ENCODE measurements at regions of chr4 and their contacts with region 1.

Region 1: DNA sequence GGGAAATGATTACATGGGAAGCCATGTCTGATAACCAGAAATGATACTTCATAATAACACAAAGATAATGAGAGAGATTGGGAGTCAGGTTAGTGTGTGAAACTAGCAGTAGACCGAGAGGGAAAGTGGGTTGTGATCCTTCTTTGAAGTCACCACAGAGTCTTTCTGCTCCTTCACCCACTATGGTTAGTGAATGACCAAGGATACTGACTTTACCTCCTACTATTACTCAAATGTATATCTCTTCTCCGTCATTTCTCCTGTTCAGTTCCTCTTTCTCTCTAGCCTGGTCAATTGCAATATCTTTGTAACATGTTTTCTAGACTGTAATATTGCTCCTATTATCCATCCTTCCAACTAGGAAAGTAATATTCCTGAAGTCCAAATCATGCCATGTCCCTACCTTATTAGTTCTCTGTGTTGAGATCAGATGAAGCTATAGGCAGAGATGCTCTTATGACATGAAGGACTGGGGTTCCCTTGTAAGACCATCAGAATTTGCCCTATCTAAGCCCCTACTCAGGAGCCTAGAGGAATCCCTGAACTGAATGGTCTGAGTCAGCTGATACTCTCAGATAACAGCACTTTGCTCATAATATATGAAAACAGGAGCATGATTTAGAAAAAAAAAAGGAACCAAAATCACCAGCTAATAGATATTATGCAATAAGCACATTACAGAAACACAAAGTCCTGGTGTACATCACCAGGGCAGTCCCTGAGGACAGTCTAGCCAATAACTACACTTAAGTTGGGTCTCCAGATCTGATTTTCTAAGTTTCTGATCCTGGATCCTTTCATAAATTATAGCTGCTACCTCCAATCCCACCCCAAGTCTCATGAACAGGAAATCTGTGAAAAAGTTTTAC is 81.2 kb downstream of the SHROOM3 start:
- DNase-seq: no peak
- ATAC-seq: no peak
- H3K4me3 ChIP-seq: no peak overlapping the region
- H3K27ac ChIP-seq: no peak overlapping the region
- H3K4me1 ChIP-seq: 0 out of 2 replicates have a peak, but pooled peaks cover 1% of the 10 kb centered on the region
- H3K27me3 ChIP-seq: no peaks in the 10 kb centered on the region
- CTCF ChIP-seq: no peak
- POLR2A ChIP-seq: no peak
- RAD21 ChIP-seq: no peak

Region 2: GRCh38 chr4:76585897-76586360 is 69.7 kb after region 1 on chr4:
- CTCF ChIA-PET with region 1: no interaction called
- POLR2A ChIA-PET with region 1: no interaction called
- dilution Hi-C with region 1: no loop called
- in situ Hi-C with region 1: no loop called
- intact Hi-C with region 1: loop called (anchors 5 kb)
- DNase-seq: no peak
- ATAC-seq: no peak
- H3K4me3 ChIP-seq: peak overlapping the region; percentile 38; the same call in 1 of the 2 replicates
- H3K27ac ChIP-seq: peak overlapping the region; percentile 3; the same call in 1 of the 2 replicates
- H3K4me1 ChIP-seq: peaks cover 15% of the 10 kb centered on the region
- H3K27me3 ChIP-seq: no peaks in the 10 kb centered on the region
- CTCF ChIP-seq: no peak
- POLR2A ChIP-seq: no peak
- RAD21 ChIP-seq: no peak

Region 3: GRCh38 chr4:76658231-76659102 is 142.3 kb after region 1 on chr4:
- CTCF ChIA-PET with region 1: no interaction called
- POLR2A ChIA-PET with region 1: no interaction called
- dilution Hi-C with region 1: no loop called
- in situ Hi-C with region 1: no loop called
- intact Hi-C with region 1: loop called (anchors 10 kb)
- DNase-seq: peak; percentile 86
- ATAC-seq: peak; percentile 83
- H3K4me3 ChIP-seq: no peak overlapping the region
- H3K27ac ChIP-seq: peak overlapping the region; percentile 88
- H3K4me1 ChIP-seq: peaks cover 17% of the 10 kb centered on the region
- H3K27me3 ChIP-seq: no peaks in the 10 kb centered on the region
- CTCF ChIP-seq: no peak
- POLR2A ChIP-seq: no peak
- RAD21 ChIP-seq: no peak

Region 4: DNA sequence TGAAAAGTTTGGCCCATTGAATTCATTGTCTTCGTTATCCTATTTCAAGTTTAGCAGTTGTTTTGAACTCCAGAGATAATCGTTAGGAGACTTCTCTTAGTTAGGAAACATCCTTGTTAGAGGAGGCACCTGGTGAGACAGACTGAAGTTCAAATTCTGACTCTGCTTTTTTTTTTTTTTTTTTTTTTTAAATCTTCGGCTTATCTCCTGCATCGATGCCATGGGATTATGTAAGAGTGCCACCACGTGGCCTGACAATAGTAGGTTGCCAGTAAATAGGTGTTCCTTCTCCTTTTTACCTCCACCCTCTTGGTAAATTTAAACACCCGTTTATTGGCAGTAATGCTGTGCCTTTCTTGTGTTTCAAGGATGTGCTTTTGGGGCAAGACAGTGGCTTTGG is 232.4 kb after region 1 on chr4:
- CTCF ChIA-PET with region 1: no interaction called
- POLR2A ChIA-PET with region 1: no interaction called
- dilution Hi-C with region 1: no loop called
- in situ Hi-C with region 1: no loop called
- intact Hi-C with region 1: loop called (anchors 1 kb)
- DNase-seq: peak; percentile 41
- ATAC-seq: no peak
- H3K4me3 ChIP-seq: no peak overlapping the region
- H3K27ac ChIP-seq: no peak overlapping the region
- H3K4me1 ChIP-seq: peaks cover 11% of the 10 kb centered on the region
- H3K27me3 ChIP-seq: no peaks in the 10 kb centered on the region
- CTCF ChIP-seq: peak; percentile 41
- POLR2A ChIP-seq: no peak
- RAD21 ChIP-seq: peak; percentile 64

Region 5: DNA sequence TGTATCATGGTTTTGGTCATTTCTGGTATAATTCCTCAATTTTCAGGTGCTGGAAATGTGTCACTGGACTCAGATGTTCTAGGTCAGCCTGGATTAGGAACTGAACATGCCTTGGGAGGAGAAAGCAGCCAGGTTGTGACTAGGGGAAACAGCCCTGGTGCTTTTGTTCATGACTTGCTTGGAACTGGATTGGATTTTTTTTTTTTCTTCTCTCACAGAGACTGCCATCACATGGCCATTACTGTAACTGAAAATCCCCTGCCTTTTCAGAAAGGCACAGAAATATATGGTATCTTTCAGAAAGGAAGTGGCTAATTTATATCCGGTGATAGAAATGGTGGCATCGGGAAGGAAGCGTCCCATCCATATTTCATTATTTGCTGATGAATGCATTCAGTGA is 467.9 kb after region 1 on chr4:
- CTCF ChIA-PET with region 1: no interaction called
- POLR2A ChIA-PET with region 1: no interaction called
- dilution Hi-C with region 1: no loop called
- in situ Hi-C with region 1: no loop called
- intact Hi-C with region 1: loop called (anchors 1 kb)
- DNase-seq: peak; percentile 69
- ATAC-seq: no peak
- H3K4me3 ChIP-seq: no peak overlapping the region
- H3K27ac ChIP-seq: peak overlapping the region; percentile 12
- H3K4me1 ChIP-seq: peaks cover 36% of the 10 kb centered on the region
- H3K27me3 ChIP-seq: no peaks in the 10 kb centered on the region
- CTCF ChIP-seq: peak; percentile 50
- POLR2A ChIP-seq: no peak
- RAD21 ChIP-seq: peak; percentile 36

Region 6: GRCh38 chr4:77157859-77158486 is 641.8 kb after region 1 on chr4:
- CTCF ChIA-PET with region 1: no interaction called
- POLR2A ChIA-PET with region 1: no interaction called
- dilution Hi-C with region 1: no loop called
- in situ Hi-C with region 1: no loop called
- intact Hi-C with region 1: no loop called
- DNase-seq: peak; percentile 85
- ATAC-seq: peak; percentile 77
- H3K4me3 ChIP-seq: peak overlapping the region; percentile 99
- H3K27ac ChIP-seq: peak overlapping the region; percentile 93
- H3K4me1 ChIP-seq: peaks cover 4% of the 10 kb centered on the region; the same call in 1 of the 2 replicates
- H3K27me3 ChIP-seq: peaks cover 3% of the 10 kb centered on the region; the same call in 1 of the 2 replicates
- CTCF ChIP-seq: no peak
- POLR2A ChIP-seq: peak; percentile 51
- RAD21 ChIP-seq: no peak

Region 7: DNA sequence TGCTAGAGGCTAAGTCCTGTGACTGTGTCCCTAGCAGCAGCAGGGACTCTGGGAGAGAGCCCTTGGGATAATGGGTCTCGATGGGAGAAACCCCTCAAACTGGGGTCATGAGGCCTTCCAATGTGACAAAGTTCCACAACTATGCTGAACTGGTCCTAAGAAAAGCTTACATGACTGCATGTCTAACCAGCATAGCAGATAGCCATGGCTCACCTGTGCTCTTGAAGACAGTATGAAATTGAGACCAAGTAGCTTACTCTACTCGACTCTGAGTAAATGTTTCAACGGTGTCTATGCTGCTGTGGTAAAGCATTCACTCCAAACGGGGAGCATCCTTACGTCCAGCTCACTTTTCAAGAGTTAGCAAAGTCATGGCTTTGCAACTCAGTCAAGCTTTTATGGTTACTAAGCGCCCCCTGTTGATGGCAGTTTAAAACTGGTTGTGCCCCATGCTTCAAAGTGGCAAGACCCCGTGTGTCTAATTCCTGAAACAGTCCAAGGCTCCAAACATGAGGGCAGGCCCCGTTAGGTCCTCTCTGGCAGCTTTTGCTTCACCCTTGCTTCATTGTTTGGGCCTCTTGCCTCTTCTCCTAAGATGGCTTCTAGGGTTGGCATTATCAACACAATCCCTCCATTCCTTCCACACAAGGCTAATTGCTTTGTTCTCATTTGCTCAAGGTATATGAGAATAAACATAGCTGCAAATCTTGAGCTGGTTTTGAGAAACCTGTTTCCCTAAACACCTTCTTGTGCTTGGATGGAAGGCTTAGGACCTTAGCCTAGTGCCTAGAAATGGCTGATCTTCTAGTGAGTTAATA is 687.4 kb after region 1 on chr4:
- CTCF ChIA-PET with region 1: no interaction called
- POLR2A ChIA-PET with region 1: no interaction called
- dilution Hi-C with region 1: no loop called
- in situ Hi-C with region 1: no loop called
- intact Hi-C with region 1: loop called (anchors 1 kb)
- DNase-seq: peak; percentile 82
- ATAC-seq: peak; percentile 93
- H3K4me3 ChIP-seq: no peak overlapping the region
- H3K27ac ChIP-seq: no peak overlapping the region
- H3K4me1 ChIP-seq: no peaks in the 10 kb centered on the region
- H3K27me3 ChIP-seq: peaks cover 50% of the 10 kb centered on the region
- CTCF ChIP-seq: peak; percentile 86
- POLR2A ChIP-seq: no peak
- RAD21 ChIP-seq: peak; percentile 94